Ascending aorta (tissue), 2 donors: ENCODE measurements at regions of chr17 and their contacts with region 1.

Region 1: DNA sequence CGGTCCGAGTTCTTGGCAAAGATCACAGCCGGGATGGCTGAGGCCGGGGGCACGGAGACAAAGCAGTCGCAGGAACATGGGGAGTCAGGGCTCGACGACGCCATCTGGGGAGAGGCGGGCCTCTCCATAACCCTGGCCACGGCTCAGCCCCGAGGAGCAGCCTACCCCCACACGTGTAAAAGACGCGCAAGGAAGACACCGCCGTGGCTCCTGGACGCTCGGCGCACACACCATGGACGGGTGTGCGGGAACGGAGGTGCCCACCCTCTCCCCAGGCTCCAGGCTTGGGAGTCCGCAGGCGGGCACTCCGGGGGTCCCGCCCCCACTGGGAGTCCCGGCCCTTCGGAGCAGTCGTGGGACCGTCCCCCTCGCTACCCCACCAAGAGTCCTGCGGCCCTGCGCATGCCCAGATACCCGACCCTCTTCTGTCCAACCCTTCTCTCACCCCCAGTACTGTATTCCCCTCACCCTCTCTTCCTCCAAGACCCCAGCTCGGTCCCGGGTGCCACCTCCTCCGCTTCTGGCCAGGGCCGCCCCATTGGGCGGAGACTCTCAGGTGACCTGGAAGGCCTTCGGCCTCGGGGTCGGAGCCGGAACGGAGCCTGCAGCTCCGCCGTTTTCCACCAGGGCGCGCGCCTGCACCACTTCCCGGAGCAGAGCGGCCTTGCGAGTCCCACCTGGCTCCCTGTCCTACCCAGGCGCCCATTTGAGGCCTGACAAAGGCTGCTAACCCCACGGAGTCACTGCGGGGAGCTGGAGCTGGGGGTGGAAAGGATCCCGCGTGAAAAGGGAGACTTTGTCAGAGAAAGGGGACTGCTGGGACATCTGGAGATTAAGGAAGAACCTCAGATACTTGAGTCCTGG is at the start of gene SCRN2:
- DNase-seq: peak; percentile 30 to 94
- H3K4me3 ChIP-seq: peak within 1 kb of the TSS; percentile 64 to 83
- H3K27ac ChIP-seq: peak within 1 kb of the TSS; percentile 13 to 35
- H3K4me1 ChIP-seq: peaks cover 5 to 6% of the 10 kb centered on the region in 2 donors
- H3K27me3 ChIP-seq: no peaks in the 10 kb centered on the region
- CTCF ChIP-seq: peak; percentile 98 to 99 (median 98)
- total RNA-seq, gene SCRN2: 126 TPM

Region 2: DNA sequence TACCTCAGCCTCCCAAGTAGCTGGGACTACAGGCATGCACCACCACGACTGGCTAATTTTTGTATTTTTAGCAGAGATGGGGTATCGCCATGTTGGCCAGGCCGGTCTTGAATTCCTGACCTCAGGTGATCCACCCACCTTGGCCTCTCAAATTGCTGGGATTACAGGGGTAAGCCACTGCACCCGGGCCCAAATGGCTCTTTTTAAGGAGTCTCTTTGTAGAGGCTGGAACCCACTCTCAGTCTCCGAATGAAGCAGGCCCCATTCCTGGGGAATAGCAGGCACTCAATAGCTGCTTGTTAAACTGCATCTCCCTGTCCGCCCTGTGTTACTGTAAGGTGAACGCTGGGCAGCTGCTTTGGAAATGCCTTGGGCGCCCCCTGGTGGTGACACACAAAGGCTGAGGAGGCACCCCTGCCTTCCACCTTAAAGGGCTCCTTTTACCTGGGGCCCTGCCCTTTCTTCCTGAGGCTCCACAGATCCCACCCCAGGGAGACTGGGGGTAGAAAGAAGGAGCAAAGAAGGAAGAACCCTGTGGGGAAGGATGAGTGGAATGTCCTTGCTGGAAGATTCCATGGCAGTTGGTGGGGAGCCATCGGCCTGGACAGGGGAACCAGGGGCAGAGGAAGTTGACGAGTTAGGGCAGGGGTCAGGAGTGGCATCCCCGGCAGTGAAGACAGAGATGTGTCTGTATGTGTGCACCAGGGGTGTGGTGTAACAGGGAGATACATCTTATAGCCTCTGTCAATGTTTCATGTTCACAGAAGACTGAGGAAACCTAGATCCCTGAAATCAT is 49.0 kb after region 1 on chr17:
- intact Hi-C with region 1: loop called (anchors 1 kb)
- DNase-seq: peak; percentile 23 to 93
- H3K4me3 ChIP-seq: no peak overlapping the region
- H3K27ac ChIP-seq: no peak overlapping the region
- H3K4me1 ChIP-seq: peaks cover 0 to 5% of the 10 kb centered on the region in 2 donors
- H3K27me3 ChIP-seq: no peaks in the 10 kb centered on the region
- CTCF ChIP-seq: peak; percentile 90 to 98 (median 92)

Region 3: GRCh38 chr17:47941236-47941994 is 100.4 kb after region 1 on chr17 and contains the start of gene PNPO:
- intact Hi-C with region 1: loop called (anchors 5 kb)
- DNase-seq: peak; percentile 94 to 98
- H3K4me3 ChIP-seq: peak within 1 kb of the TSS; percentile 93 to 96
- H3K27ac ChIP-seq: peak within 1 kb of the TSS; percentile 69 to 84
- H3K4me1 ChIP-seq: peaks cover 7 to 12% of the 10 kb centered on the region in 2 donors
- H3K27me3 ChIP-seq: no peaks in the 10 kb centered on the region
- CTCF ChIP-seq: peak in 1 of 3 experiments; percentile 4
- total RNA-seq, gene PNPO: 36.7 TPM

Region 4: DNA sequence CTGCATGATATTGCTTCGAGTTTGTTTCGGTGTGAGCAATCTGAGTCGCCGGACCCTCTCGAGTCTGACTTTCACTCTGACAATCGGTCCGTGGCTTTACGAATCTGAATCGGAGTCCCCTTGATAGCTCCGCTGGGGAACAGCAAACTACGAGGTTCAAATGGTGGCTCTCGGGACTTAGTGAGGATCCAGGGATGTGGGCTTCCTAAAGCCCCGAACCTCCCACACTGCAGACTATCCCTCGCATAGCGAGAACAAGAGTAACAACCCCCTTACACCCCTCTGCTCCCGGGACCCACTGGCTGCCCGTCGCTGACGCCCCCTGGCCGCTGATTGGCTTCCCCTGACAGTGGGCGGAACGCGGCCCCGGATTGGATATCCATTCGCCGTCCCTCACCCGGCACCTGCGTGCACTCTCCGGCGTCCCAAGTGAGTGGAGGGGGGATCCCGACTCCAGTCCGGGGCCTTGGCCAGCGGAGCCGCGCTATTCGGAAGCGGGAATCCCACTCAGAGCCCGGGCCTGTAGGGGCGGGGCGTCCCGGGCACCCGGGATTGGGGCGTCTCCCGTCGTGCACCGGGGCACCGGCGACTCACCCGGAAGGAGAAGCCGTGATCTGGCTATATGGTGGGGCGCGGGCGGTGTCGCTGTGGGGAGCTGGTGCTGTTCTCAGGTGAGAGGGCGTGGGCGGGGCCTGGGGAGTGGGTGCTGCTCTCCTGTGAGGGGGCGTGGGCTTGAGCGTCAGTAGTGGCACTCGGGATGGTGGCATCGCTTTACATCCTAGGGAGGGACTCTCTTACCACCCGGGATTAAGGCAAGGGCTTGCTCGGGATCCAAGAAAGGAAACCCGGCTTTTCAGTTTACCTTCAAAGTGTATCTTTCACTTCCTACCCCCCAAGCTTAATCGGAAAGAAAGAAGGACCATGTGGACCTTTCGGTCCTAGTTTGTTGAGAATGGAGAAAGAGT is 266.5 kb after region 1 on chr17 and contains the start of gene SNX11:
- intact Hi-C with region 1: loop called (anchors 10 kb)
- DNase-seq: peak; percentile 79 to 94
- H3K4me3 ChIP-seq: peak within 1 kb of the TSS; percentile 65 to 84
- H3K27ac ChIP-seq: peak within 1 kb of the TSS; percentile 92 to 95
- H3K4me1 ChIP-seq: peaks cover 5 to 10% of the 10 kb centered on the region in 2 donors
- H3K27me3 ChIP-seq: no peaks in the 10 kb centered on the region
- CTCF ChIP-seq: no peak
- total RNA-seq, gene SNX11: 6.6 TPM